CD8-positive, alpha-beta T cell (primary cell): ENCODE measurements at regions of chr11 and their contacts with region 1.

Region 1: DNA sequence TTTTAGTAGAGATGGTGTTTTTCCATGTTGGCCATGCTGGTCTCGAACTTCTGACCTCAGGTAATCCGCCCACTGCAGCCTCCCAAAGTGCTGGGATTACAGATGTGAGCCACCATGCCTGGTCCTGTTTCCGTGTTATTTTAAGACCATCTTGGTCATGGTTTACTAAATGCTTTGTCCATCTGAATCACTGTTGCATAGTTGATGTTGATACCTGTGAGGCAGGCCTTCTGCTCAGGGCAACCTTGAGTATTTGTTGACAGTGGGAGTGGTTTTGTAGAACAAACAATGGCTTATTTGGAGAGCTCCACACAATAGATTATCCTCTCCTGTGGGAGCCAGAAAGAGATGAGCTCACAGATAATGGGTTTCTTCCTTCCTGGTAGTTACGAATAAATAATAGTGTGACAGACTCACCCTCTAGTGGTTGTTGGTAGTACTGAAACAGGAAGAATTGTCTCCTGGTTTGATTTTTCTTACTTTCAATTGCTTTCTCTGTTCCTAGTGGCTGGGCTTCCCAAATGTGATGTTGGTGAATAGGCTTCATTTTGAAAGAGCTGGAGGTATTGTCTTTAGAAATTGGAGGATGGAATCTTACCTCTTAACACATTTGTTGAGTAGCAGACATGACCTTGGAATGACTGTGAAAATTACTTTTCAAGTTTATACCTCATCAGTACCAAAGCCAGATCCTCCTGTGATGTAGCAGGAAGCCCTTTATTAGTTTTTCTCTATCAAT is 39.0 kb downstream of the CTNND1 start:
- DNase-seq: peak in 4 of 9 experiments; percentile 17 to 82 (median 62)
- ATAC-seq: peak; percentile 97
- H3K4me3 ChIP-seq: no peak overlapping the region
- H3K4me3 Mint-ChIP-seq: no peak overlapping the region
- H3K27ac ChIP-seq: peak overlapping the region in 1 of 2 experiments; percentile 59
- H3K27ac Mint-ChIP-seq: peak overlapping the region; percentile 83
- H3K4me1 ChIP-seq: peaks cover 22% of the 10 kb centered on the region
- H3K4me1 Mint-ChIP-seq: peaks cover 20% of the 10 kb centered on the region
- H3K27me3 ChIP-seq: no peaks in the 10 kb centered on the region
- H3K27me3 Mint-ChIP-seq: no peaks in the 10 kb centered on the region
- CTCF ChIP-seq: peak; percentile 94

Region 2: DNA sequence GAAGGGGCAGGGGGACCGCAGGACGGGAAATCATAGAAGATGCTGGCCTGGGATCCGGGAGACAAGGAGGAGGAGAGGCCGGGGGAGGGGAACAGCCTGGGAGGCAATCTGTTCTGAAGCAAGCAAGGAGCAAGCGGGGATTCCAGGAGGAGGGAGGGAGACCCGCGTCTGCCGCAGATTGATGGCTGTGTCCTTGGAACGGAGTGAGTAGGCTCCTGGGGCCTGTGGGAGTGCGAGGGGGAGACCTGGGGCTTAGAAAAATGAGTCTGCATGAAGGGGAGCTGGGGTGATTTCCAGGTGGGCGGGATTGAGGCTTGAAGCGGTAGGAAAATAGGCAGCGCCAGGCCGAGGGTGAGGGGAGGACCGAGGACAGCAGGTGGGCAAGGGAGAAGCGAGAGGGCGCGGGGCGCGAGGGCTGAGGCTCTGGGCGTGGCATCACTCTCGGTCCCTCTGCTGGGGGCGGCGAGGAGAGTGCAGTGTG is 620.5 kb before region 1 on chr11:
- CTCF ChIA-PET with region 1: no interaction called
- POLR2A ChIA-PET with region 1: no interaction called
- intact Hi-C with region 1: no loop called
- DNase-seq: no peak
- ATAC-seq: no peak
- H3K4me3 ChIP-seq: no peak overlapping the region
- H3K4me3 Mint-ChIP-seq: no peak overlapping the region
- H3K27ac ChIP-seq: no peak overlapping the region
- H3K27ac Mint-ChIP-seq: no peak overlapping the region
- H3K4me1 ChIP-seq: no peaks in the 10 kb centered on the region
- H3K4me1 Mint-ChIP-seq: peaks cover 2% of the 10 kb centered on the region
- H3K27me3 ChIP-seq: peaks cover 0 to 12% of the 10 kb centered on the region in 2 experiments
- H3K27me3 Mint-ChIP-seq: peaks cover 52% of the 10 kb centered on the region
- CTCF ChIP-seq: no peak

Region 3: GRCh38 chr11:57456960-57457642 is 343.5 kb before region 1 on chr11:
- CTCF ChIA-PET with region 1: interaction called, 5 read pairs
- POLR2A ChIA-PET with region 1: no interaction called
- intact Hi-C with region 1: loop called in 1 of 2 experiments (anchors 1 kb)
- DNase-seq: peak in 8 of 9 experiments; percentile 55 to 83 (median 78)
- ATAC-seq: peak; percentile 60
- H3K4me3 ChIP-seq: no peak overlapping the region
- H3K4me3 Mint-ChIP-seq: peak overlapping the region; percentile 73
- H3K27ac ChIP-seq: no peak overlapping the region
- H3K27ac Mint-ChIP-seq: no peak overlapping the region
- H3K4me1 ChIP-seq: peaks cover 37% of the 10 kb centered on the region
- H3K4me1 Mint-ChIP-seq: peaks cover 27% of the 10 kb centered on the region
- H3K27me3 ChIP-seq: peaks cover 14 to 35% of the 10 kb centered on the region in 2 experiments
- H3K27me3 Mint-ChIP-seq: peaks cover 25% of the 10 kb centered on the region
- CTCF ChIP-seq: peak; percentile 99

Region 4: GRCh38 chr11:57644748-57645688 is 155.6 kb before region 1 on chr11:
- CTCF ChIA-PET with region 1: interaction called, 18 read pairs
- POLR2A ChIA-PET with region 1: interaction called, 3 read pairs
- intact Hi-C with region 1: loop called (anchors 2 to 5 kb)
- DNase-seq: peak; percentile 74 to 93 (median 85)
- ATAC-seq: peak; percentile 61
- H3K4me3 ChIP-seq: no peak overlapping the region
- H3K4me3 Mint-ChIP-seq: no peak overlapping the region
- H3K27ac ChIP-seq: no peak overlapping the region
- H3K27ac Mint-ChIP-seq: no peak overlapping the region
- H3K4me1 ChIP-seq: peaks cover 15% of the 10 kb centered on the region
- H3K4me1 Mint-ChIP-seq: peaks cover 34% of the 10 kb centered on the region
- H3K27me3 ChIP-seq: peaks cover 0 to 22% of the 10 kb centered on the region in 2 experiments
- H3K27me3 Mint-ChIP-seq: peaks cover 48% of the 10 kb centered on the region
- CTCF ChIP-seq: peak; percentile 78

Region 5: GRCh38 chr11:57712256-57713150 is 88.1 kb before region 1 on chr11 and contains the start of gene TMX2:
- CTCF ChIA-PET with region 1: interaction called, 18 read pairs
- POLR2A ChIA-PET with region 1: no interaction called
- intact Hi-C with region 1: loop called (anchors 1 to 2 kb)
- DNase-seq: peak; percentile 78 to 97 (median 88)
- ATAC-seq: peak; percentile 87
- H3K4me3 ChIP-seq: peak within 1 kb of the TSS; percentile 98 to 100
- H3K4me3 Mint-ChIP-seq: peak within 1 kb of the TSS; percentile 98
- H3K27ac ChIP-seq: peak within 1 kb of the TSS; percentile 91 to 93
- H3K27ac Mint-ChIP-seq: peak within 1 kb of the TSS; percentile 97
- H3K4me1 ChIP-seq: peaks cover 33% of the 10 kb centered on the region
- H3K4me1 Mint-ChIP-seq: peaks cover 52% of the 10 kb centered on the region
- H3K27me3 ChIP-seq: no peaks in the 10 kb centered on the region
- H3K27me3 Mint-ChIP-seq: no peaks in the 10 kb centered on the region
- CTCF ChIP-seq: no peak
- total RNA-seq, gene TMX2: 38.5 to 42.1 TPM

Region 6: DNA sequence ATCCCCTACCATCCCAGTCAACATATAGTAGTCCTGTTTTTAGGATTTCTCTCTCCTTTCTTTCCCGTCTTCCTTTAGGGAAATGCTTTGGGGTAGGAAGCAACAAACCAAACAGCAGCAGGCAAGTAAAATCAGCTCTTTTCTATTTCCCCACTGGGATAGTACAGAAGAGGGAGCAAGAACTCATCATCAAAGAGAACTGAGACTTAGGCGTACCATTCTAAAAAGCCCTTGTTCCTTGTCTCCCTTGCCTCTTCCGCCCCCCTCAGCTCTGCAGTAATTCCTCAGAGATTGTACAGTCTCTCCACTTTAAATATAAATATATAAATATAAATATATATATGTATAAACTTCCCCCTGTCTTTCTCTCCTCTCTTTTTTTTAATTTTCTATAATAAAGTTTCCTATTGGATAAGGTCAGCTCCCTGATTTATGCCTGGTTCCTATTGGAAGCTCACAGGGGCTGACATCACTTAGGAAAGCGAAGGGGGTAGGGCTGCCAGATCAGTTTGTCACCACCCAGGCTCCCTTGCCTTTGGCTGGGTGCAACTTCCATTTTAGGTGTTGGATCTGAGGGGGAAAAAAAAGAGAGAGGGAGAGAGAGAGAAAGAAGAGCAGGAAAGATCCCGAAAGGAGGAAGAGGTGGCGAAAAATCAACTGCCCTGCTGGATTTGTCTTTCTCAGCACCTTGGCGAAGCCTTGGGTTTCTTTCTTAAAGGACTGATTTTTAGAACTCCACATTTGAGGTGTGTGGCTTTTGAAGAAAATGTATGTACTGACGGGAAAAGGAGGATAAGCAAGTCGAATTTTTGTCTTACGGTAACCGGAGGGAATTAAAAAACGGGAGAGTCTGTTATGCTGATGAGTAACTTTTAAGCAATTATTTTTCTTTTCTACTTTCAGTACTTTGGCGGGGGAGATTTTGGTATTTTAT is 39.0 kb before region 1 on chr11 and contains the start of gene CTNND1:
- CTCF ChIA-PET with region 1: interaction called, 28 read pairs
- POLR2A ChIA-PET with region 1: interaction called, 6 read pairs
- intact Hi-C with region 1: loop called in 1 of 2 experiments (anchors 1 kb)
- DNase-seq: peak in 1 of 9 experiments; percentile 26
- ATAC-seq: no peak
- H3K4me3 ChIP-seq: no peak within 1 kb of the TSS
- H3K4me3 Mint-ChIP-seq: peak within 1 kb of the TSS; percentile 48
- H3K27ac ChIP-seq: no peak within 1 kb of the TSS
- H3K27ac Mint-ChIP-seq: no peak within 1 kb of the TSS
- H3K4me1 ChIP-seq: no peaks in the 10 kb centered on the region
- H3K4me1 Mint-ChIP-seq: peaks cover 19% of the 10 kb centered on the region
- H3K27me3 ChIP-seq: no peaks in the 10 kb centered on the region
- H3K27me3 Mint-ChIP-seq: no peaks in the 10 kb centered on the region
- CTCF ChIP-seq: no peak
- total RNA-seq, gene CTNND1: 12.3 to 14.0 TPM

Region 7: GRCh38 chr11:57812634-57813033 is 12.0 kb after region 1 on chr11:
- CTCF ChIA-PET with region 1: interaction called, 11 read pairs
- POLR2A ChIA-PET with region 1: no interaction called
- intact Hi-C with region 1: no loop called
- DNase-seq: no peak
- ATAC-seq: no peak
- H3K4me3 ChIP-seq: no peak overlapping the region
- H3K4me3 Mint-ChIP-seq: no peak overlapping the region
- H3K27ac ChIP-seq: no peak overlapping the region
- H3K27ac Mint-ChIP-seq: no peak overlapping the region
- H3K4me1 ChIP-seq: no peaks in the 10 kb centered on the region
- H3K4me1 Mint-ChIP-seq: no peaks in the 10 kb centered on the region
- H3K27me3 ChIP-seq: no peaks in the 10 kb centered on the region
- H3K27me3 Mint-ChIP-seq: no peaks in the 10 kb centered on the region
- CTCF ChIP-seq: no peak

Region 8: GRCh38 chr11:57920971-57921370 is 120.4 kb after region 1 on chr11:
- CTCF ChIA-PET with region 1: no interaction called
- POLR2A ChIA-PET with region 1: no interaction called
- intact Hi-C with region 1: no loop called
- DNase-seq: no peak
- ATAC-seq: no peak
- H3K4me3 ChIP-seq: no peak overlapping the region
- H3K4me3 Mint-ChIP-seq: no peak overlapping the region
- H3K27ac ChIP-seq: no peak overlapping the region
- H3K27ac Mint-ChIP-seq: no peak overlapping the region
- H3K4me1 ChIP-seq: no peaks in the 10 kb centered on the region
- H3K4me1 Mint-ChIP-seq: no peaks in the 10 kb centered on the region
- H3K27me3 ChIP-seq: no peaks in the 10 kb centered on the region
- H3K27me3 Mint-ChIP-seq: peaks cover 6% of the 10 kb centered on the region
- CTCF ChIP-seq: no peak

Region 9: DNA sequence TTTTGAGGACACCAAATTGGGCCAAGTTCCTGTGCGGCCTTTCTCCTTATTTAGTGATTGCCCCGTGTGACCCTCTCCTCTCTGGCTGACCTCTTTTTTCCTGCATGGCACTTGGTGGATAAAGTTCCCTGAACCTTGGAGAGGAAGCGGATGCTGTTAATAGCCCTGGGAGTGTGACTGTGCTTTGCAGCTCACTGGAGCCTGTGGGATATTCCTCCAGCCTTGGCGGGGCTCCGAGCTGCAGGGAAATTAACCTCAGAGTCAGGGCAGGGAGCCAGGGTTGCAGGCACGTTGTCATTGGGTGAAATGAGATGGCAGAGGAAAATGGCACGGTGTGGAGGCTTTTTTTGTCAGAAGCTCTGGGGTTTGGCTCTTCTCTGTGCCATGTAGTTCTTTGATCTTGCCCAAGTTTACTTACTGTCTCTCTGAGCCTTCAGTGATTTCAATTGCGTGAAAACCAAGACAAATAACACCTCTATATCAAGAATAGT is 224.0 kb after region 1 on chr11:
- CTCF ChIA-PET with region 1: no interaction called
- POLR2A ChIA-PET with region 1: no interaction called
- intact Hi-C with region 1: no loop called
- DNase-seq: no peak
- ATAC-seq: no peak
- H3K4me3 ChIP-seq: no peak overlapping the region
- H3K4me3 Mint-ChIP-seq: no peak overlapping the region
- H3K27ac ChIP-seq: no peak overlapping the region
- H3K27ac Mint-ChIP-seq: no peak overlapping the region
- H3K4me1 ChIP-seq: no peaks in the 10 kb centered on the region
- H3K4me1 Mint-ChIP-seq: no peaks in the 10 kb centered on the region
- H3K27me3 ChIP-seq: no peaks in the 10 kb centered on the region
- H3K27me3 Mint-ChIP-seq: peaks cover 5% of the 10 kb centered on the region
- CTCF ChIP-seq: no peak

Region 10: DNA sequence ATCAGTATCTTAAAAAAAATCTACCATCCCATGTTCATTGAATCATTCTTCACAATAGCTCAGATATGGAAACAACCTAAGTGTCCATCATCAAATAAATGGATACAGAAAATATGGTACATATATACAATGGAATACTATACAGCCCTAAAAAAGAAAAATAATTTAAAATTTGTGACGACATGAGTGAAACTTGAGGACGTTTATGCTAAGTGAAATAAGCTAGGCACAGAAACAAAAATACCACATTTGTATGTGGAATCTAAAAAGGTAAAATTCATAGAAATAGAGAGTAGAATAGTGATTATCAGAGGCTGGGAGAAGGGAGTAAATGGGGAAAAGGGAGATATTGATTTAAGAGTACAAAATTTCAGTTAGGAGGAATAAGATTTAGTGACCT is 285.9 kb after region 1 on chr11:
- CTCF ChIA-PET with region 1: no interaction called
- POLR2A ChIA-PET with region 1: no interaction called
- intact Hi-C with region 1: no loop called
- DNase-seq: no peak
- ATAC-seq: no peak
- H3K4me3 ChIP-seq: no peak overlapping the region
- H3K4me3 Mint-ChIP-seq: no peak overlapping the region
- H3K27ac ChIP-seq: no peak overlapping the region
- H3K27ac Mint-ChIP-seq: no peak overlapping the region
- H3K4me1 ChIP-seq: no peaks in the 10 kb centered on the region
- H3K4me1 Mint-ChIP-seq: no peaks in the 10 kb centered on the region
- H3K27me3 ChIP-seq: peaks cover 0 to 3% of the 10 kb centered on the region in 2 experiments
- H3K27me3 Mint-ChIP-seq: peaks cover 4% of the 10 kb centered on the region
- CTCF ChIP-seq: no peak